ENCODE measurements at regions of chrX and their contacts with region 1.

Region 1: DNA sequence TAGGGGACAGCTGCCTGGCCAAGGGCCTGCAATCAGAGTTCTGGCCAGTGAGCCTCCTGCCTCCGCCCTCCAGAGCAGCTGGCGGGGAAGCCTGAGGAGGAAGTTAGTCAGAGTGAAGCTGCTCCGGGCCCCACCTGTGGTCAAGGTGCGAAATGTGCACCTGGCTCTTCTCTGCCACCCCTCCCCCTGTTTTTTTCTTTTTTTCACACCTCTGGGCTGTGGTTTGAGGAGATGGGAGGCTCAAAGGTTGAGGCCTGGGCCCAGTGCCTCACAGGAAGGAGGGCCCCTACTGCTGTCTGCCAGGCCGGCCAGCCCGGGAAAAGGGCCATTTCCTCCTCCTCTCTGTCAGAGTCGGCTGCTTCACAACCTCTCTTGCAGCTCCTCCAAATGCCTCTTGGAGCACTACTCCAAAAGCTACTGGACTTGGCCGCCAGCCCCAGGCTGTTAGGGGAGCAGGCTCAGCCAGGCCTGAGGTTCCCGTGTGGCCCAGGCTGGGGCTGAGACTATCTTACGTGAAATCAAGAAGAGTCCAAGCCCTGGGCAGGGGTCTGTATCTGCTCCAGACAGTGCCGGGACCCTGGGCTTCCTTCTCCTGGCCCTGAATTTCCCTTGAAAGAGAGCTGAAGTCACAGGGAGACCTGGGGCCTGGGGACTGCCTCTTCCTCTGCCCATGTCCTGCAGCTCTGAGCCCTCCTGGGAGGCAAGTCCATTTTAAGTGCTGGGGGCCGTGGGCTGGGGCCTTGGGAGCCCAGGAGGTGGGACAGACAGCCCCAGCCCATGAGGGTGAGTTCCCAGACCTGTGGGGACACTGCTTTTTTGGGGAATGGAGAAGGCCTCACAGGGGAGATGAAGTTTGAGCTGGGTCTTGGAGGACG is 4.5 kb upstream of the CXCR3 start:
- DNase-seq: peak; percentile 82
- ATAC-seq: peak; percentile 68
- H3K4me3 Mint-ChIP-seq: peak overlapping the region; percentile 70
- H3K27ac Mint-ChIP-seq: peak overlapping the region; percentile 91
- H3K4me1 Mint-ChIP-seq: peaks cover 70% of the 10 kb centered on the region
- H3K27me3 Mint-ChIP-seq: no peaks in the 10 kb centered on the region

Region 2: GRCh38 chrX:71504346-71504745 is 118.5 kb before region 1 on chrX:
- CTCF ChIA-PET with region 1: no interaction called
- POLR2A ChIA-PET with region 1: no interaction called
- DNase-seq: no peak
- ATAC-seq: no peak
- H3K4me3 Mint-ChIP-seq: no peak overlapping the region
- H3K27ac Mint-ChIP-seq: no peak overlapping the region
- H3K4me1 Mint-ChIP-seq: no peaks in the 10 kb centered on the region
- H3K27me3 Mint-ChIP-seq: peaks cover 3% of the 10 kb centered on the region

Region 3: DNA sequence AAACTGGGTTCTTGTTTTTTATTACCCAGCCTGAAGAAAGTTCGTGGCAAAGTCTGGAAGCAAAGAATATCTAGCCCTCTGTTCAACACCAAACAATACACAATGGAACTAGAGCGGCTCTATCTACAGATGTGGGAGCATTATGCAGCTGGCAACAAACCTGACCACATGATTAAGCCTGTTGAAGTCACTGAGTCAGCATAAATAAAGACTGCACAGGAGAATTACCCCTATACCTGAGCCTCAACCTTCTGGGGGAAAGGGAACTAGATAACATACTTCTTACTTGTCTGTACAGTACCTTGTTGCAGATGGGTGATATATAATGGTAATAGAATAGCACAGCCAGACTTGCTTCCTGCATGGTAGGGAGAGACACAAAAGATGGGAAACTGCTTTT is 49.2 kb before region 1 on chrX:
- CTCF ChIA-PET with region 1: no interaction called
- POLR2A ChIA-PET with region 1: no interaction called
- DNase-seq: no peak
- ATAC-seq: no peak
- H3K4me3 Mint-ChIP-seq: no peak overlapping the region
- H3K27ac Mint-ChIP-seq: no peak overlapping the region
- H3K4me1 Mint-ChIP-seq: peaks cover 8% of the 10 kb centered on the region
- H3K27me3 Mint-ChIP-seq: no peaks in the 10 kb centered on the region

Region 4: DNA sequence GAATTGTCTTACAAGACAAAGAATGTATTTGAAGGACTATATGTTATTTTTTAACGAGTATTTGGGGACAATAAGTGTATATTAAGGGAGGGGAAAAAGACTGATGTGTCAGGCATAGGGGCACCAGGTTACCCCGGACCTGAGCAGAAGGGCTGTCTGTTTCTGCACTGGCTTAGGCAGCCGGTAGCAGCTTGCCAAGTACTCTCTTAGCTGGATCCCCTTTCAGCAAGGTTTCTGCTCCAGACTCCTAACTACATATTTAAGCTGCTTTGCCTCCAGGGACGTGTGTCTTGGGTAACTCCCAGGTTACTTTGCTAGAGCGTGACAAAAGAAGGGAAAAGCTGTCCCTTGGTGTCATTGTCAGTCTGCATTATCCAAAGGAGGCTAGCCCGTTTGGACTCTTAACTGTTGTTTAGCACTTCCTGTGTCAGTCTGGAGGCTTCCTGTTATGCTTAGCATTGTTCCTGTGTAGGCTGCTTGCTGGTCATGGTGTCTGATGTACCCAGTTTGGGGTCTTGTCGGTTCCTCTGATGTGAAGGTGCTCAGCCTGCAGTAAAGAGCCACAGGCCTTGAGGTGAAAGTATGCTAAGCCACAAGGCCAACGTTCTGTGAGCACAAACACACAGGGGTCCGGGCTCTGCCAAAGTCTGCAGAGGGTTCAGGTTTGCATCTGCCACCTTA is 16.1 kb before region 1 on chrX:
- CTCF ChIA-PET with region 1: interaction called, 16 read pairs
- POLR2A ChIA-PET with region 1: interaction called, 6 read pairs
- DNase-seq: peak; percentile 68
- ATAC-seq: peak; percentile 89
- H3K4me3 Mint-ChIP-seq: peak overlapping the region; percentile 27
- H3K27ac Mint-ChIP-seq: peak overlapping the region; percentile 96
- H3K4me1 Mint-ChIP-seq: peaks cover 82% of the 10 kb centered on the region
- H3K27me3 Mint-ChIP-seq: no peaks in the 10 kb centered on the region

Region 5: DNA sequence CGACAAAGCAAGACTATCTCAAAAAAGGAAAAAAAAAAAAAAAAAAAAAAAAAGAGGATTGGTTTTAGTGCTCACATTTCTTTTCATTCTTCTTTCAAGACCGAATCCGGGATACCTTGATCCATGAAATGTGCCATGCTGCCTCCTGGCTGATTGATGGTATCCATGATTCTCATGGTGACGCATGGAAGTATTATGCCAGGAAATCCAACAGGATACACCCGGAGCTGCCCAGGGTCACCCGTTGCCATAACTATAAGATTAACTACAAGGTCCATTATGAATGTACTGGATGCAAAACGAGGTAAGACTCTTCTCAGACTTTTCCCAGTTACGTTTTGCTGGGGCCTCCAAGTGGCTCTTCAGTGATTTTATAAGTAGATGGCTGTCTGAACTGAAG is 10.6 kb before region 1 on chrX:
- CTCF ChIA-PET with region 1: interaction called, 16 read pairs
- POLR2A ChIA-PET with region 1: interaction called, 6 read pairs
- DNase-seq: no peak
- ATAC-seq: no peak
- H3K4me3 Mint-ChIP-seq: no peak overlapping the region
- H3K27ac Mint-ChIP-seq: no peak overlapping the region
- H3K4me1 Mint-ChIP-seq: peaks cover 73% of the 10 kb centered on the region
- H3K27me3 Mint-ChIP-seq: no peaks in the 10 kb centered on the region

Region 6: GRCh38 chrX:71637848-71638247 is 15.0 kb after region 1 on chrX:
- CTCF ChIA-PET with region 1: interaction called, 56 read pairs
- POLR2A ChIA-PET with region 1: interaction called, 10 read pairs
- DNase-seq: no peak
- ATAC-seq: peak; percentile 42
- H3K4me3 Mint-ChIP-seq: no peak overlapping the region
- H3K27ac Mint-ChIP-seq: no peak overlapping the region
- H3K4me1 Mint-ChIP-seq: peaks cover 17% of the 10 kb centered on the region
- H3K27me3 Mint-ChIP-seq: no peaks in the 10 kb centered on the region

Region 7: GRCh38 chrX:71652405-71652804 is 29.6 kb after region 1 on chrX:
- CTCF ChIA-PET with region 1: interaction called, 56 read pairs
- POLR2A ChIA-PET with region 1: interaction called, 3 read pairs
- DNase-seq: peak; percentile 76
- ATAC-seq: peak; percentile 71
- H3K4me3 Mint-ChIP-seq: no peak overlapping the region
- H3K27ac Mint-ChIP-seq: peak overlapping the region; percentile 42
- H3K4me1 Mint-ChIP-seq: peaks cover 45% of the 10 kb centered on the region
- H3K27me3 Mint-ChIP-seq: peaks cover 3% of the 10 kb centered on the region

Measured in activated CD8-positive, alpha-beta T cell treated with anti-CD3 and anti-CD28 coated beads, Interleukin-2, amount 10 ng/mL, durations not matched to agents 7 days and 5 days (primary cell).